ENCODE measurements at regions of chr21 and their contacts with region 1.

Region 1: GRCh38 chr21:42117229-42117966 is 46.3 kb downstream of the UMODL1 start:
- DNase-seq: peak; percentile 84
- CTCF ChIP-seq: peak; percentile 85

Region 2: DNA sequence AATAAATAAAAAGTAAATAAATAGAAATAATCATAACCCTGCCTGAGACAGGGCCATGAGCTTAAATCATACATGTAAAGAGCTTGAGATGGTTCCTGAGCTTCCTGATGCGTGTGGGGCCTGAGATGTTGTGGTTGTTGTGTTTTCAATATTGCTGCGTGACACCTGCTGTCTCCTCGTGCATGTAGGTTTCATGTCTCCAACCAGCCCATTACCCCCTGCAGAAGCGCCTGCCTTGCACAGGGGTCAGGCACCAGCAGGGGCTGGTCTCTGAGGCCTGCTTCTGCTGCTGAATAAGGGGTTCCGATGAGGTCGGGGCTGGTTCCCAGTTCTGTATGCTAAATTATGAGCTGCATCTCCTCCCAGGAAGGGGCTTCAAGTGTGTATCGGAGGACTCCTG is 30.4 kb before region 1 on chr21:
- CTCF ChIA-PET with region 1: interaction called, 14 read pairs
- POLR2A ChIA-PET with region 1: no interaction called
- DNase-seq: no peak
- CTCF ChIP-seq: no peak

Region 3: GRCh38 chr21:42097860-42098454 is 19.4 kb before region 1 on chr21:
- CTCF ChIA-PET with region 1: interaction called, 18 read pairs
- POLR2A ChIA-PET with region 1: no interaction called
- DNase-seq: no peak
- CTCF ChIP-seq: no peak

Measured in GM10248 (cell line).